ENCODE measurements at regions of chr5 and their contacts with region 1.

Region 1: GRCh38 chr5:58460732-58461286 is 923 bp upstream of the PLK2 start:
- DNase-seq: peak; percentile 76 to 95 (median 88)
- ATAC-seq: peak; percentile 79
- H3K4me3 ChIP-seq: peak overlapping the region; percentile 66
- H3K4me3 Mint-ChIP-seq: peak overlapping the region; percentile 86 to 96 (median 91)
- H3K27ac ChIP-seq: peak overlapping the region; percentile 84
- H3K27ac Mint-ChIP-seq: peak overlapping the region; percentile 20 to 90 (median 79)
- H3K4me1 ChIP-seq: peaks cover 0 to 9% of the 10 kb centered on the region in 2 donors
- H3K4me1 Mint-ChIP-seq: peaks cover 9 to 26% (median 16%) of the 10 kb centered on the region in 7 donors
- H3K27me3 ChIP-seq: no peaks in the 10 kb centered on the region
- H3K27me3 Mint-ChIP-seq: peaks cover 4 to 22% (median 14%) of the 10 kb centered on the region in 5 donors

Region 2: GRCh38 chr5:56909294-56910209 is 1551.3 kb before region 1 on chr5 and contains the start of gene SETD9:
- CTCF ChIA-PET with region 1: no interaction called
- POLR2A ChIA-PET with region 1: no interaction called
- intact Hi-C with region 1: loop called (anchors 1 to 2 kb)
- DNase-seq: peak; percentile 67 to 94 (median 73)
- ATAC-seq: peak; percentile 90
- H3K4me3 ChIP-seq: peak within 1 kb of the TSS; percentile 75
- H3K4me3 Mint-ChIP-seq: peak within 1 kb of the TSS; percentile 88 to 100 (median 91)
- H3K27ac ChIP-seq: peak within 1 kb of the TSS; percentile 79
- H3K27ac Mint-ChIP-seq: peak within 1 kb of the TSS; percentile 81 to 97 (median 89)
- H3K4me1 ChIP-seq: no peaks in the 10 kb centered on the region
- H3K4me1 Mint-ChIP-seq: peaks cover 12 to 24% (median 21%) of the 10 kb centered on the region in 7 donors
- H3K27me3 ChIP-seq: no peaks in the 10 kb centered on the region
- H3K27me3 Mint-ChIP-seq: peaks cover 0 to 15% (median 0%) of the 10 kb centered on the region in 5 donors
- total RNA-seq, gene SETD9: 3.7 to 9.7 (median 6.6) TPM

Region 3: DNA sequence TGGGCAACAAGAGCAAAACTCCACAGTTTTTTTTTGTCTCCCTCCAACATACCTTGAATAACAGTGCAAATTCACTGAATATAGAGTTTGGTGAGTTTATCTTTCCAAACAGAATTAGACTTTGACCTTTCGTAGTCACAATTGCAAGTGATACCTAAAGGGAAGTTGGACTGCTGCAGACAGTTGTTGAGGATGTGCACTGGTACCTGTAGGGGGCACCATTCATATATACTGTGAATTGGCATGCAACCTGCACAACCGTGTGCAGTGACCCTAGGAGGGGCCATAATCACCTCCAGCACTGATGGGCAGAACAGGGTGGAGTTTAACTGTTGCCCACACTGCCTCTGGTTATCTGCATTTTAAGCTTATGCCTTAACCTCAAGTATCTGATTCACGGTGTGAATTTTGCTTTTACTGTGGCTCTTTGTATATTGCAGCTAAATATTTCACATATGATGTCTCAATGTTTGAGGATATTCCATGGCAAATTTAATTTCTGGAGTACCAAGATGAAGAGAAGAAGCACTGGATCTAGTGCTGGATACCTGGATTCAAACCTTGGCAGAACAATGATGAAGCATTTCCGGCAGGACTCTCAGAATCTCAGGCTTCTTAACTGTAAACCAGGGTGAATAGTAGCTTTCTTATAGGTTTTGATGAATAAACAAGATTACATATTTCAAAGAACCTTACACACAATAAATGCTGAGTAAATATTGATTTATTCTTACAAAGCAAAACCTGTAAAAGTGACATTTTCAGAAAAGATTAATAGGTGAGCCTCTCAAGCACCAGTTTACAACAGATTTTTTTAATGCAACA is 1122.5 kb before region 1 on chr5:
- CTCF ChIA-PET with region 1: no interaction called
- POLR2A ChIA-PET with region 1: no interaction called
- intact Hi-C with region 1: loop called (anchors 1 kb)
- DNase-seq: peak in 1 of 9 donors; percentile 2
- ATAC-seq: peak; percentile 37
- H3K4me3 ChIP-seq: no peak overlapping the region
- H3K4me3 Mint-ChIP-seq: no peak overlapping the region
- H3K27ac ChIP-seq: no peak overlapping the region
- H3K27ac Mint-ChIP-seq: no peak overlapping the region
- H3K4me1 ChIP-seq: no peaks in the 10 kb centered on the region
- H3K4me1 Mint-ChIP-seq: peaks cover 0 to 2% (median 0%) of the 10 kb centered on the region in 7 donors
- H3K27me3 ChIP-seq: no peaks in the 10 kb centered on the region
- H3K27me3 Mint-ChIP-seq: peaks cover 0 to 4% (median 0%) of the 10 kb centered on the region in 5 donors

Region 4: DNA sequence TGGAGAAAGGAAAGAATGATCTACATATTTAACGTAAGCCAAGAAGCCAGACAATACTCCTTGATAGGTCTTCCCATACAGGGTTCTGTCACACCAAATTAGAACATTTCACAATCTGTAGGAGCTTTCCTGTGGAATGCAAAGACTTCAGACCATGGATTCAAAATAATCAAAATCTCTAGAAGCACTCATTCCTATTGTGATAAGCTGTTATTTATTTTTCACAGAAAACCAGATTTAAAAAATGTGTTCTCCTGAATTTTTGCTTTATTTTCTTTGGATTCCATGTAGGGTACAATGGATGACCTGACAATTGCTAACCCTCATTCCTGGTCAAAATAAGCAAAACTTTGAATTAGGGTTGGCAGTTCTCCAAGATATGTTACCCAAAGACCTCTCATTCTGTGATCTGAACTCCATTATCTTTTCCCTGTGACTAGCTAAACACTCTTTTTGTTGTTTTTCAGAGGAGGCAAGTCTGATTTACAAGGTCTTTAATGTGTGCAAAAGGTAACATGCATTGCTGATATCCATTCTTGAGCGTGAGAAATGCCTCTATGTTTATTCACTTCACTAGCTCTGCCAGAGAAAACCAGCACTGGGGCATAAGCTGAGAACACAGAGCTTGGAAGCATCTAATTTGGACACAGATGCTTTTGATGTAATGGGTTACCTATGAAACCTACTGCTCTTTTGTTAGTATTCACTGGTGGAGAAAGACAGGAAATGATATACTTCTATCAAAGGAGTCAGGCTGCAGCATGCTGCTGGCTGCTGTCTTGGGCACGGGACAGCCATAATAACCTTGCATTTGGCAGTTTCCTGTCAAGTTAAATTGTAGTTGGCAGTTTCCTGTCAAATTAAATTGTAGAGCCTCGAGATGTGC is 1009.6 kb before region 1 on chr5:
- CTCF ChIA-PET with region 1: interaction called, 7 read pairs
- POLR2A ChIA-PET with region 1: no interaction called
- intact Hi-C with region 1: loop called in 1 of 2 experiments (anchors 1 kb)
- DNase-seq: peak in 6 of 9 donors; percentile 14 to 59 (median 53)
- ATAC-seq: peak; percentile 55
- H3K4me3 ChIP-seq: no peak overlapping the region
- H3K4me3 Mint-ChIP-seq: peak overlapping the region in 6 of 10 donors; percentile 2 to 51 (median 22)
- H3K27ac ChIP-seq: no peak overlapping the region
- H3K27ac Mint-ChIP-seq: peak overlapping the region in 8 of 9 donors; percentile 34 to 83 (median 66)
- H3K4me1 ChIP-seq: peaks cover 0 to 18% of the 10 kb centered on the region in 2 donors
- H3K4me1 Mint-ChIP-seq: peaks cover 0 to 35% (median 20%) of the 10 kb centered on the region in 7 donors
- H3K27me3 ChIP-seq: no peaks in the 10 kb centered on the region
- H3K27me3 Mint-ChIP-seq: no peaks in the 10 kb centered on the region

Region 5: GRCh38 chr5:57650360-57651069 is 810.3 kb before region 1 on chr5:
- CTCF ChIA-PET with region 1: interaction called, 9 read pairs
- POLR2A ChIA-PET with region 1: no interaction called
- intact Hi-C with region 1: loop called (anchors 1 kb)
- DNase-seq: peak in 5 of 9 donors; percentile 8 to 27 (median 15)
- ATAC-seq: peak; percentile 55
- H3K4me3 ChIP-seq: no peak overlapping the region
- H3K4me3 Mint-ChIP-seq: no peak overlapping the region
- H3K27ac ChIP-seq: no peak overlapping the region
- H3K27ac Mint-ChIP-seq: no peak overlapping the region
- H3K4me1 ChIP-seq: no peaks in the 10 kb centered on the region
- H3K4me1 Mint-ChIP-seq: no peaks in the 10 kb centered on the region
- H3K27me3 ChIP-seq: no peaks in the 10 kb centered on the region
- H3K27me3 Mint-ChIP-seq: peaks cover 8 to 23% (median 16%) of the 10 kb centered on the region in 5 donors

Region 6: DNA sequence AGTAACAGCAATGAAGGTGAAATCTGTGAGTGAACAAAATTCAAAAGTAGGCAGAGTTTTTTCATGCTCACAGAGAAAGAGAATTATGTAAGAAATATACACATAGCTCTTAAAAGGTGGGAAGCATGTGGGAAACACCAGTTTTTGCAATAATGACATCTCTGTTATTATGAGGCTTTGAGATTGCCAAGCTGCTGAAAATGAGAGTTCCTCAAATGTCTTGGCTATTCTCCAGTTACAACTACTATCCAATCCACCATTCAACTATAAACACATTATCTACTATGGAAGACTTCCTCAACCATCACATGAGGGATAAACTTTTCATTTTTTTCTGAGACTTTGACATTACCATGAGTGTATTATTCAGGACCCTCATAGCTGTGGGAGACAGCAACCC is 557.4 kb before region 1 on chr5:
- CTCF ChIA-PET with region 1: no interaction called
- POLR2A ChIA-PET with region 1: no interaction called
- intact Hi-C with region 1: no loop called
- DNase-seq: no peak
- ATAC-seq: no peak
- H3K4me3 ChIP-seq: no peak overlapping the region
- H3K4me3 Mint-ChIP-seq: no peak overlapping the region
- H3K27ac ChIP-seq: no peak overlapping the region
- H3K27ac Mint-ChIP-seq: no peak overlapping the region
- H3K4me1 ChIP-seq: no peaks in the 10 kb centered on the region
- H3K4me1 Mint-ChIP-seq: no peaks in the 10 kb centered on the region
- H3K27me3 ChIP-seq: no peaks in the 10 kb centered on the region
- H3K27me3 Mint-ChIP-seq: no peaks in the 10 kb centered on the region

Region 7: GRCh38 chr5:59039296-59040023 is 578.7 kb after region 1 on chr5:
- CTCF ChIA-PET with region 1: interaction called, 3 read pairs
- POLR2A ChIA-PET with region 1: no interaction called
- intact Hi-C with region 1: loop called in 1 of 2 experiments (anchors 1 kb)
- DNase-seq: peak; percentile 81 to 94 (median 93)
- ATAC-seq: peak; percentile 87
- H3K4me3 ChIP-seq: peak overlapping the region; percentile 51
- H3K4me3 Mint-ChIP-seq: peak overlapping the region; percentile 83 to 98 (median 96)
- H3K27ac ChIP-seq: peak overlapping the region; percentile 86
- H3K27ac Mint-ChIP-seq: peak overlapping the region; percentile 97 to 100 (median 99)
- H3K4me1 ChIP-seq: peaks cover 16 to 33% of the 10 kb centered on the region in 2 donors
- H3K4me1 Mint-ChIP-seq: peaks cover 30 to 62% (median 56%) of the 10 kb centered on the region in 7 donors
- H3K27me3 ChIP-seq: no peaks in the 10 kb centered on the region
- H3K27me3 Mint-ChIP-seq: no peaks in the 10 kb centered on the region